Natural killer cell (primary cell): ENCODE measurements at regions of chr1 and their contacts with region 1.

Region 1: GRCh38 chr1:246117066-246117791 is 389.9 kb downstream of the SMYD3 start:
- DNase-seq: peak in 1 of 2 donors; percentile 62
- ATAC-seq: peak; percentile 80 to 90 (median 88)
- H3K4me3 ChIP-seq: no peak overlapping the region
- H3K4me3 Mint-ChIP-seq: peak overlapping the region; percentile 71
- H3K27ac ChIP-seq: no peak overlapping the region
- H3K27ac Mint-ChIP-seq: peak overlapping the region; percentile 26 to 35
- H3K4me1 ChIP-seq: peaks cover 2% of the 10 kb centered on the region
- H3K4me1 Mint-ChIP-seq: peaks cover 6 to 19% of the 10 kb centered on the region in 2 donors
- H3K27me3 ChIP-seq: no peaks in the 10 kb centered on the region
- H3K27me3 Mint-ChIP-seq: peaks cover 0 to 2% of the 10 kb centered on the region in 2 donors
- CTCF ChIP-seq: peak; percentile 58

Region 2: DNA sequence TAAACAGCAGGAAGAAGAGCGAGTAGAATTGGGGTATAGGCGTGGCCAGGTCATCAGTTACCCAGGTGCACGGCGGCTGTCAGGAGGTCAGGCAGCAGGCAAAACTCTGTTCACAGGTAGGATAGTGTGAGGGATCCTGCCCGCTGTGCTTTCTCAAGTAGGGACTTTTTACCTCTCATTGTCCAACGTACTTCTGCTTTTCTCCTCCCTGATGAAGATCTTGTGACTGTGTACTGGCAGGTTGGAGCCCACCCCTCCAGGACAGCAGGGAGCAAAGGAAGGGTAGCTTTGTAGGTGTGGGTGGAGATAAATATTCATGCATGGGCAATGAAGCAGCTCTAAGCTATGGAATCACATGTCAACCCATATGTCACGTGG is 589.0 kb before region 1 on chr1:
- intact Hi-C with region 1: no loop called
- DNase-seq: no peak
- ATAC-seq: no peak
- H3K4me3 ChIP-seq: no peak overlapping the region
- H3K4me3 Mint-ChIP-seq: no peak overlapping the region
- H3K27ac ChIP-seq: no peak overlapping the region
- H3K27ac Mint-ChIP-seq: no peak overlapping the region
- H3K4me1 ChIP-seq: no peaks in the 10 kb centered on the region
- H3K4me1 Mint-ChIP-seq: no peaks in the 10 kb centered on the region
- H3K27me3 ChIP-seq: no peaks in the 10 kb centered on the region
- H3K27me3 Mint-ChIP-seq: peaks cover 6 to 15% of the 10 kb centered on the region in 2 donors
- CTCF ChIP-seq: no peak

Region 3: DNA sequence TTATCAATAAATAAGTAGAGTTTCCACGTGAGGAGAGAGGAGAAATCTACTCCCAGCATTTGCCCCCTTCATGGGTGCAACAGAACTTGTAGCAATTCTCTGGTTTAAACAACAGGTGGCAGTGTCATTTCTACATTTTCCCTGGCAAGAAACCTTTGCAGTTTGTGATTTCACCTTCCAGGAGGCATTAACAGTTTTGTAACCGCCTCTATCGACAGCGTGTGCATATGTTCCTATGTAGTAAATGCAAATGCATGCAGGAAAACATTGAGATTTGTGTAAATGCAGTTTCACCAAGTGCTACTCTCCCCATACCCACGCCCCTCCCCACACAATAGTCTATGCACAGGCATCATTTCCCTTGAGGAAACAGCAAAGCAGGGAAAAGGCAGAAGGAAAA is 104.9 kb before region 1 on chr1:
- intact Hi-C with region 1: loop called (anchors 1 kb)
- DNase-seq: peak in 1 of 2 donors; percentile 40
- ATAC-seq: peak in 1 of 3 donors; percentile 47
- H3K4me3 ChIP-seq: no peak overlapping the region
- H3K4me3 Mint-ChIP-seq: no peak overlapping the region
- H3K27ac ChIP-seq: no peak overlapping the region
- H3K27ac Mint-ChIP-seq: no peak overlapping the region
- H3K4me1 ChIP-seq: no peaks in the 10 kb centered on the region
- H3K4me1 Mint-ChIP-seq: peaks cover 0 to 8% of the 10 kb centered on the region in 2 donors
- H3K27me3 ChIP-seq: no peaks in the 10 kb centered on the region
- H3K27me3 Mint-ChIP-seq: no peaks in the 10 kb centered on the region
- CTCF ChIP-seq: peak; percentile 55